GM18951 (cell line): ENCODE measurements at regions of chr5 and their contacts with region 1.

Region 1: DNA sequence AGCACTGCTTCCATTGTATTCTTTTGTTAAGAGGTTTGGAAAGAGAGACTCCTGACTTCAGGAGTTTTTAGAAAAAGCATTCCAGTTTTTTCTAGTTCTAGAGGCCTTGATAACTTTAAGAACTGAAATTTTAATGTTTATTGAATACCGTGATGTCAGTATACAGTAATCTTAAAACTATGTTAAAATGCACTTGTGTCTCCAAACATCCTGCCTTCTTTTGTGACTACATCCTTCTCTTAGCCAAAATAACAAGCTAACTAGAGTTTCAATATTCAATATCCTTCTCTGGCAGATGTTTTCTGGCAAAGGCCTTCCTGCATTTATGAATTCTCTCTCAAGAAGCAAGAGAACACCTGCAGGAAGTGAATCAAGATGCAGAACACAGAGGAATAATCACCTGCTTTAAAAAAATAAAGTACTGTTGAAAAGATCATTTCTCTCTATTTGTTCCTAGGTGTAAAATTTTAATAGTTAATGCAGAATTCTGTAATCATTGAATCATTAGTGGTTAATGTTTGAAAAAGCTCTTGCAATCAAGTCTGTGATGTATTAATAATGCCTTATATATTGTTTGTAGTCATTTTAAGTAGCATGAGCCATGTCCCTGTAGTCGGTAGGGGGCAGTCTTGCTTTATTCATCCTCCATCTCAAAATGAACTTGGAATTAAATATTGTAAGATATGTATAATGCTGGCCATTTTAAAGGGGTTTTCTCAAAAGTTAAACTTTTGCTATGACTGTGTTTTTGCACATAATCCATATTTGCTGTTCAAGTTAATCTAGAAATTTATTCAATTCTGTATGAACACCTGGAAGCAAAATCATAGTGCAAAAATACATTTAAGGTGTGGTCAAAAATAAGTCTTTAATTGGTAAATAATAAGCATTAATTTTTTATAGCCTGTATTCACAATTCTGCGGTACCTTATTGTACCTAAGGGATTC is 43.1 kb downstream of the NDFIP1 start:
- POLR2A ChIP-seq: no peak

Region 2: GRCh38 chr5:140840978-140841959 is 1310.4 kb before region 1 on chr5 and contains the start of gene PCDHA8:
- in situ Hi-C with region 1: no loop called
- POLR2A ChIP-seq: no peak

Region 3: GRCh38 chr5:141878711-141879425 is 272.8 kb before region 1 on chr5:
- in situ Hi-C with region 1: no loop called
- POLR2A ChIP-seq: no peak

Region 4: DNA sequence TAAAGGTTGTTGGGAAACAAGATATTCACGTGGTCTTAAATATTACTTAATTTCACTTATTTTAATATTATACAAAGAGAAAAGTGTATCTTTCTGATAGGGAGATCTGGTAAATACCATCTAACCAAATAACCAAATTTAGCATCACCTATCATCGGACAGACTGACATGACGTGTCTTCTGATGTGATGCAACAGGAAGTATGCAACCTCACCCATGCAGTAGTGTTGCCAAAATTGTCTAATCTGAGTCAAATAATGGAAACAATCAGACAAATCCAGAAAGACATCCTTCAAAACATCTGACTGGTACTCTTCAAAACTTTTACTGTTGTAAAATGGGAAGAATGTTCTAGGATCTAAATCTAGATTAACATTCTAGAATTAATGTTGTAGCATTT is 386.2 kb after region 1 on chr5:
- in situ Hi-C with region 1: no loop called
- POLR2A ChIP-seq: no peak

Region 5: GRCh38 chr5:142551338-142552067 is 399.8 kb after region 1 on chr5:
- in situ Hi-C with region 1: loop called (anchors 25 kb)
- POLR2A ChIP-seq: no peak

Region 6: GRCh38 chr5:142618130-142618523 is 466.4 kb after region 1 on chr5:
- in situ Hi-C with region 1: no loop called
- POLR2A ChIP-seq: no peak

Region 7: DNA sequence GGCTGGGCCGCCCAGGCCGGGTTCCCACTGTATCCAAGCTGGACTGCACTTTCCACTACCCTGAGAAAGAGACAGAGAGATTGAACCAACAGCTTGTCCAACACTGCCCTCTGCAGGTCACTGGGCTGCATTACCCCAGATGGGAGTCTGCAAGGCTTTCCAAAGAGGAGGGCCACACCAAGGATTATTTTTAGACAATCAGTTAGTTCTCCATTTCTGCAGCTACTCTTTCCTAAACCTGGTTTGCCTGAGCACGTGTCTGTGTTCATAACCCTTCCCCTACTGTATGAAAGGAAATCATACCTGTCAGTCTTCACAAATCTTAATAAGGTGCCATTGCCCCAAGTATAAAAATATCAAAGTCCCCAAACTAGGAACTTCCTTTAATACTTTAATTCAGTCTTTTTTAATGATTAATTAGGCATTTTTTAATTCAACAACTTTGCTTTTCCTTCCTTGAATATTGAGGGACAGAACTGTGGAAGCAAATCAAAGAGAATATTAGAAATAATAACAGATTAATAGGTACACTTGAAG is 547.5 kb after region 1 on chr5:
- in situ Hi-C with region 1: loop called (anchors 25 kb)
- POLR2A ChIP-seq: no peak